Motor neuron (in vitro differentiated cells): ENCODE measurements at regions of chr5 and their contacts with region 1.

Region 1: DNA sequence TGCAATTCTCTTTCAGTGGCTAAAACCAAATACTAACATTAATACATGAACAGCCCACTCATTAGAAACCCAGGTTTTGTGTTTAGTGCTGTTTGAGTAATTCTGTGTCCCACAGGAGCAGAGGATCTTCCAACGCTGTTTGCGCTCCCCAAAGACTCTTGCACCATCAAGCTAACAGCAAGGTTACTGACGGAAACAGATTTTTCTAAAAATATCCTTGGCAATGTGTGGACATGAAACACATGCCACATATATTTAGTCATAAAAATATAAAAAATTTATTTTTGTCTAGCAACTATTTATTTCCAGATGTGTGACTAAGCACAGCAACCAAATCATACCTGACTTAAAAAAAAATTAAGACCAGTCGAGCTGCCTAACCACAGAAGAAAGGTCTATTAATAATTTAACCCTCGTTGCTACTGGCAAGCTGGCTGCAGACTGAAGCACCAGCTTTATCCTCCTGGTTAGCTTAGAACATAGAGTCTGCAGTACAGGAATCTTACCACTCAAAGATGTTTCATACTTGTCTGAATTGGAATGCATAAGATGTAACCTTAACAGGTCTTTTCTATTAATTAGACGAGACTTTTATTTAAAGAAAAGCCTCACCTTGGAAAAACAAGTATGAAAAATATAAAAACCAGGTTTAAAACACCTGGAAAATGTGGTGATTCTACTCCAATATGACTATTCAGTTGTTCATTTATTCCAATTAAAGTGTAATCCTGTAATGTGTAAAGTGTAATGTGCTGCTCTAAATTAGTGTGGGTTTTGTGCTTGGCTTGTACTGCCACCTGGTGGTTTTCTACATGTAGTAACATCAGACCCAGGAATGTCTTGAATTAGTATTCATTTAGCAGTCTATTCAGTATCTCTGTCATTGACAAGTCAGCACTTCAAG is 272.5 kb downstream of the EPB41L4A start:
- ATAC-seq: peak; percentile 73 to 99 (median 94)
- H3K4me3 ChIP-seq: no peak overlapping the region
- H3K27ac ChIP-seq: no peak overlapping the region
- H3K4me1 ChIP-seq: peaks cover 0 to 6% of the 10 kb centered on the region in 2 donors

Region 2: GRCh38 chr5:111158105-111158744 is 988.4 kb before region 1 on chr5:
- in situ Hi-C with region 1: loop called in 6 of 9 experiments (anchors 10 to 25 kb)
- ATAC-seq: peak; percentile 53 to 76 (median 68)
- H3K4me3 ChIP-seq: no peak overlapping the region
- H3K27ac ChIP-seq: no peak overlapping the region
- H3K4me1 ChIP-seq: no peaks in the 10 kb centered on the region

Region 3: GRCh38 chr5:111512375-111513130 is 634.0 kb before region 1 on chr5 and contains the start of gene STARD4:
- in situ Hi-C with region 1: loop called in 2 of 9 experiments (anchors 25 kb)
- ATAC-seq: peak; percentile 94 to 97 (median 96)
- H3K4me3 ChIP-seq: peak within 1 kb of the TSS; percentile 61 to 82 (median 77)
- H3K27ac ChIP-seq: peak within 1 kb of the TSS; percentile 50 to 63
- H3K4me1 ChIP-seq: peaks cover 12 to 25% of the 10 kb centered on the region in 2 donors
- total RNA-seq, gene STARD4: 17.0 to 68.5 (median 37.9) TPM

Region 4: GRCh38 chr5:111530298-111530740 is 616.3 kb before region 1 on chr5:
- in situ Hi-C with region 1: loop called in 4 of 9 experiments (anchors 25 kb)
- ATAC-seq: peak in 3 of 8 experiments; percentile 74 to 100 (median 98)
- H3K4me3 ChIP-seq: no peak overlapping the region
- H3K27ac ChIP-seq: no peak overlapping the region
- H3K4me1 ChIP-seq: no peaks in the 10 kb centered on the region

Region 5: DNA sequence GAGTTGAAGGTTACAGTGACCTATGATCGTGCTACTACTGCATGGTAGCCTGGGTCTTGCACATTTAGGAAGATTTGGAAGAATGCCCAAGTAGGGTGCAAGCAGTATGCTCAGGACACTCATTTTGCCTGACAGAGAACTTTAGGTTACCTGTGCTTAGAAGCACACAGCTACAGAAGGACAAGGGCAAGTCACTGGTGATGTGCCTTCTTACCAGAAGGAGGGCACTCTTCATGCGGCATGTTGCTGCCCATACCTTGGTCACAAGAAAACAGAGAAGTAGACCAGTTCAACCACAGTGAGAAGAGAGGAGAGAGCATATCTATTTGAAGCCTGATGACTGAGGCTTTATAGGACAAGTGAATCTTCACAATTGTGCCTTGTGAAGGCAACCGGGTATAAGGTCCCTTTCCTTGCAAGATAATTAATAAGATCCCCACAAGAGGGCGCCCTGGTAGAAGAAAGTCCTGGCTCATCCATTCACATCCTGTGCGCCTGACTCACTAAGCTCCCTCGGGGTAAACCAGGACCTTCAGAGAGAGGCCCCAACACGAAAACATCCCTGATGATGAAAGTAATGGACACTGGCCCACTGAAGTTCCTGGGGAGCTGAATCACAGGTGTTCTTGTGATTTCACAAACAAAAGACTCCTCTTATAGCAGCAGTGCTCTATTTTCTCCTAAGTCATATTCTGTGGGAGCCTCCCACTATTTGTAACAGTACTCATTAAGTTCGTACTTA is 596.1 kb before region 1 on chr5:
- in situ Hi-C with region 1: loop called in 7 of 9 experiments (anchors 10 to 25 kb)
- ATAC-seq: peak; percentile 69 to 90 (median 86)
- H3K4me3 ChIP-seq: no peak overlapping the region
- H3K27ac ChIP-seq: no peak overlapping the region
- H3K4me1 ChIP-seq: peaks cover 23 to 25% of the 10 kb centered on the region in 2 donors

Region 6: GRCh38 chr5:111680737-111681413 is 465.7 kb before region 1 on chr5:
- in situ Hi-C with region 1: loop called in 1 of 9 experiments (anchors 25 kb)
- ATAC-seq: peak; percentile 38 to 98 (median 74)
- H3K4me3 ChIP-seq: no peak overlapping the region
- H3K27ac ChIP-seq: peak overlapping the region in 1 of 2 donors; percentile 14
- H3K4me1 ChIP-seq: peaks cover 13 to 14% of the 10 kb centered on the region in 2 donors

Region 7: GRCh38 chr5:111853748-111854147 is 292.8 kb before region 1 on chr5:
- in situ Hi-C with region 1: loop called in 1 of 9 experiments (anchors 25 kb)
- ATAC-seq: peak in 2 of 8 experiments; percentile 47 to 53
- H3K4me3 ChIP-seq: no peak overlapping the region
- H3K27ac ChIP-seq: no peak overlapping the region
- H3K4me1 ChIP-seq: peaks cover 5 to 9% of the 10 kb centered on the region in 2 donors

Region 8: GRCh38 chr5:112097768-112098167 is 48.8 kb before region 1 on chr5:
- in situ Hi-C with region 1: no loop called
- ATAC-seq: no peak
- H3K4me3 ChIP-seq: no peak overlapping the region
- H3K27ac ChIP-seq: no peak overlapping the region
- H3K4me1 ChIP-seq: no peaks in the 10 kb centered on the region

Region 9: GRCh38 chr5:113043491-113043931 is 896.9 kb after region 1 on chr5:
- in situ Hi-C with region 1: no loop called
- ATAC-seq: peak in 6 of 8 experiments; percentile 52 to 92 (median 80)
- H3K4me3 ChIP-seq: no peak overlapping the region
- H3K27ac ChIP-seq: no peak overlapping the region
- H3K4me1 ChIP-seq: peaks cover 9 to 13% of the 10 kb centered on the region in 2 donors